PC-3 (cell line): ENCODE measurements at regions of chr22 and their contacts with region 1.

Region 1: GRCh38 chr22:45608721-45609180 is 62.9 kb upstream of the ATXN10 start:
- DNase-seq: peak; percentile 87
- ATAC-seq: peak; percentile 66
- H3K4me3 ChIP-seq: no peak overlapping the region
- H3K27ac ChIP-seq: peak overlapping the region; percentile 98
- H3K4me1 ChIP-seq: peaks cover 50% of the 10 kb centered on the region
- H3K27me3 ChIP-seq: no peaks in the 10 kb centered on the region
- CTCF ChIP-seq: no peak

Region 2: GRCh38 chr22:45671768-45672563 is 63.2 kb after region 1 on chr22 and contains the start of gene ATXN10:
- CTCF ChIA-PET with region 1: no interaction called
- POLR2A ChIA-PET with region 1: interaction called, 19 read pairs
- intact Hi-C with region 1: no loop called
- DNase-seq: peak; percentile 61
- ATAC-seq: peak; percentile 78
- H3K4me3 ChIP-seq: peak within 1 kb of the TSS; percentile 79
- H3K27ac ChIP-seq: peak within 1 kb of the TSS; percentile 76
- H3K4me1 ChIP-seq: peaks cover 20% of the 10 kb centered on the region; the same call in 1 of the 2 replicates
- H3K27me3 ChIP-seq: no peaks in the 10 kb centered on the region
- CTCF ChIP-seq: no peak
- total RNA-seq, gene ATXN10: 40.6 and 56.3 TPM in 2 replicates

Region 3: DNA sequence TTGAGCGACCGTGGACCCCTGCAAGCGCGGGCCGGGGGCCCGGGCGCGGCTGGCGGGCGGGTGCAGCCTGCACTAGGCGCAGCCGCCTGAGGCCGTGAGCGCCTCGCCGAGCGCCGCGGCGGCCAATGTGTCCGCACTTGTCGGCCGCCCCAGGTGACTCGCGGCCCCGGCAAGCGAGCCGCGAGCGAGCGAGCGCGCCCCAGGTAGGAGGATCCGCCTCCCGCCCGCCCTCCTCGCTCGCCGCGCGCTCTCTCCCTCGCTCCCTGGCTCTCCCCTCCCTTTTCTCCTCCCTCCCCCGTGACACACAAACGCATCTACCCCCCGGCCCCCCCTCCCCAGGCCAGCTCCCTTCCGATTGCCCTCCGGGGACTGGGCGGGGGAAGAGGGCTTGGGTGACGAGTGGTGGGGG is 368.3 kb after region 1 on chr22 and contains the start of gene WNT7B:
- CTCF ChIA-PET with region 1: interaction called, 16 read pairs
- POLR2A ChIA-PET with region 1: interaction called, 4 read pairs
- intact Hi-C with region 1: no loop called
- DNase-seq: peak; percentile 83
- ATAC-seq: peak; percentile 28
- H3K4me3 ChIP-seq: peak within 1 kb of the TSS; percentile 90
- H3K27ac ChIP-seq: peak within 1 kb of the TSS; percentile 13
- H3K4me1 ChIP-seq: peaks cover 27% of the 10 kb centered on the region
- H3K27me3 ChIP-seq: no peaks in the 10 kb centered on the region
- CTCF ChIP-seq: no peak
- total RNA-seq, gene WNT7B: 42.0 and 73.1 TPM in 2 replicates

Region 4: GRCh38 chr22:46150034-46150654 is 541.4 kb after region 1 on chr22 and contains the start of gene PPARA:
- CTCF ChIA-PET with region 1: no interaction called
- POLR2A ChIA-PET with region 1: interaction called, 14 read pairs
- intact Hi-C with region 1: no loop called
- DNase-seq: peak; percentile 69
- ATAC-seq: peak; percentile 81
- H3K4me3 ChIP-seq: peak within 1 kb of the TSS; percentile 79
- H3K27ac ChIP-seq: no peak within 1 kb of the TSS
- H3K4me1 ChIP-seq: peaks cover 5% of the 10 kb centered on the region
- H3K27me3 ChIP-seq: 0 out of 2 replicates have a peak, but pooled peaks cover 4% of the 10 kb centered on the region
- CTCF ChIP-seq: no peak
- total RNA-seq, gene PPARA: 6.0 and 7.7 TPM in 2 replicates